ENCODE measurements at regions of chr16 and their contacts with region 1.

Region 1: GRCh38 chr16:30747799-30748634 is at the start of gene PHKG2:
- DNase-seq: peak; percentile 99
- ATAC-seq: peak; percentile 99
- H3K4me3 Mint-ChIP-seq: peak within 1 kb of the TSS; percentile 88
- H3K27ac Mint-ChIP-seq: peak within 1 kb of the TSS; percentile 88
- H3K4me1 Mint-ChIP-seq: peaks cover 21% of the 10 kb centered on the region
- H3K27me3 Mint-ChIP-seq: no peaks in the 10 kb centered on the region
- total RNA-seq, gene PHKG2: 21.8 to 26.0 TPM

Region 2: GRCh38 chr16:30761928-30762810 is 14.2 kb after region 1 on chr16 and contains the starts of genes CFAP119 and RNF40:
- CTCF ChIA-PET with region 1: interaction called, 10 read pairs
- POLR2A ChIA-PET with region 1: interaction called, 14 read pairs
- intact Hi-C with region 1: loop called (anchors 1 kb)
- DNase-seq: peak; percentile 94
- ATAC-seq: peak; percentile 98
- H3K4me3 Mint-ChIP-seq: peak within 1 kb of the TSS; percentile 90
- H3K27ac Mint-ChIP-seq: peak within 1 kb of the TSS; percentile 83
- H3K4me1 Mint-ChIP-seq: peaks cover 25% of the 10 kb centered on the region
- H3K27me3 Mint-ChIP-seq: no peaks in the 10 kb centered on the region
- total RNA-seq, gene CFAP119: 1.7 to 3.1 TPM
- total RNA-seq, gene RNF40: 72.3 to 85.5 TPM